ENCODE measurements at regions of chr3 and their contacts with region 1.

Region 1: GRCh38 chr3:71601811-71602210 is 18.3 kb upstream of the FOXP1 start:
- DNase-seq: no peak
- H3K4me3 ChIP-seq: no peak overlapping the region
- H3K27ac ChIP-seq: no peak overlapping the region
- H3K4me1 ChIP-seq: no peaks in the 10 kb centered on the region
- H3K27me3 ChIP-seq: no peaks in the 10 kb centered on the region
- CTCF ChIP-seq: no peak

Region 2: GRCh38 chr3:70539908-70540307 is 1061.9 kb before region 1 on chr3:
- intact Hi-C with region 1: loop called (anchors 10 kb)
- DNase-seq: no peak
- H3K4me3 ChIP-seq: no peak overlapping the region
- H3K27ac ChIP-seq: no peak overlapping the region
- H3K4me1 ChIP-seq: no peaks in the 10 kb centered on the region
- H3K27me3 ChIP-seq: no peaks in the 10 kb centered on the region
- CTCF ChIP-seq: no peak

Measured in colonic mucosa (tissue), 4 donors.